B cell (primary cell): ENCODE measurements at regions of chr10 and their contacts with region 1.

Region 1: GRCh38 chr10:8254350-8254749 is 199.9 kb downstream of the GATA3 start:
- DNase-seq: no peak
- ATAC-seq: no peak
- H3K4me3 ChIP-seq: no peak overlapping the region
- H3K4me3 Mint-ChIP-seq: no peak overlapping the region
- H3K27ac ChIP-seq: no peak overlapping the region
- H3K27ac Mint-ChIP-seq: no peak overlapping the region
- H3K4me1 ChIP-seq: no peaks in the 10 kb centered on the region
- H3K4me1 Mint-ChIP-seq: no peaks in the 10 kb centered on the region
- H3K27me3 ChIP-seq: no peaks in the 10 kb centered on the region
- H3K27me3 Mint-ChIP-seq: no peaks in the 10 kb centered on the region
- CTCF ChIP-seq: no peak

Region 2: GRCh38 chr10:7750222-7750621 is 504.1 kb before region 1 on chr10:
- CTCF ChIA-PET with region 1: no interaction called
- POLR2A ChIA-PET with region 1: no interaction called
- intact Hi-C with region 1: no loop called
- DNase-seq: no peak
- ATAC-seq: no peak
- H3K4me3 ChIP-seq: no peak overlapping the region
- H3K4me3 Mint-ChIP-seq: no peak overlapping the region
- H3K27ac ChIP-seq: no peak overlapping the region
- H3K27ac Mint-ChIP-seq: no peak overlapping the region
- H3K4me1 ChIP-seq: no peaks in the 10 kb centered on the region
- H3K4me1 Mint-ChIP-seq: no peaks in the 10 kb centered on the region
- H3K27me3 ChIP-seq: no peaks in the 10 kb centered on the region
- H3K27me3 Mint-ChIP-seq: no peaks in the 10 kb centered on the region
- CTCF ChIP-seq: no peak

Region 3: GRCh38 chr10:8331883-8332729 is 77.8 kb after region 1 on chr10:
- CTCF ChIA-PET with region 1: no interaction called
- POLR2A ChIA-PET with region 1: no interaction called
- intact Hi-C with region 1: no loop called
- DNase-seq: peak; percentile 31
- ATAC-seq: no peak
- H3K4me3 ChIP-seq: no peak overlapping the region
- H3K4me3 Mint-ChIP-seq: peak overlapping the region; percentile 67
- H3K27ac ChIP-seq: no peak overlapping the region
- H3K27ac Mint-ChIP-seq: no peak overlapping the region
- H3K4me1 ChIP-seq: peaks cover 7 to 13% of the 10 kb centered on the region in 2 donors
- H3K4me1 Mint-ChIP-seq: peaks cover 14% of the 10 kb centered on the region
- H3K27me3 ChIP-seq: peaks cover 0 to 19% (median 3%) of the 10 kb centered on the region in 4 experiments
- H3K27me3 Mint-ChIP-seq: peaks cover 41% of the 10 kb centered on the region
- CTCF ChIP-seq: no peak

Region 4: DNA sequence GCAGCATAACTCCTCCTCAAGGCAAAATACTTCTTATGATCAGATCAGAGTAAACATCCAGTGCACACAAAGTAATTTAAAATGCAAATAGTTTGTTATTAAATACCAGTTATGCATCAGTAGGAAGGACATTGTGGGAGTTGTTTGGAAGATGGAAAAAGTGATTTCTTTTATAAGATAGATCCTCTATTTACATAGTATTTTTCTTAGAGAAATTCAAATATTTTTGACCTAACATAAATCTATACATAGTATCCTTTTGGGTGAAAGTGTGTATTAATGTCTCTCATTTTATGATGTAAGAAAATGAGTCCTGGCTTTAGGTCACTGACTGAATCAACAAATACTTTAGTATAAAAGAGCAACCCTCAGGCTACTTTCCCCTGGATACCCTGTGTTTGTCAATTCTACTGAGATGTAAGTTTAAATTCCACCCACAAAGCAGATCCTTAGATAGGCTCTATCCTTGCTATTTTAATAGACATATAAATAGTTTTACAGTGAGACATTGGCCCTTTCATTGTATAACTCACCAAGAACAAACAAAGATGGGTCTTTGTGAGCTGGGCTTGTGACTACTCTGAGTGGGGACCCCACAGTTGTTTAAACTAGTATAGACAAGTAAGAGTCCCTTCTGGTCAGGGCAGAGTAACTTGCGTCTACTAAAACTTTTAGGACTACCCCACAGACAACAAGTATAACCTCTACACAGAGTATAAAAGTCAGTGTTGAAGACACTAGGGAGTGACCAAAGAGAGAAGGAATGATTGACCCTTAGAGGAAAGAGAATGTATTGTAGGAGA is 934.0 kb after region 1 on chr10:
- CTCF ChIA-PET with region 1: no interaction called
- POLR2A ChIA-PET with region 1: no interaction called
- intact Hi-C with region 1: loop called (anchors 5 kb)
- DNase-seq: no peak
- ATAC-seq: no peak
- H3K4me3 ChIP-seq: no peak overlapping the region
- H3K4me3 Mint-ChIP-seq: no peak overlapping the region
- H3K27ac ChIP-seq: no peak overlapping the region
- H3K27ac Mint-ChIP-seq: no peak overlapping the region
- H3K4me1 ChIP-seq: no peaks in the 10 kb centered on the region
- H3K4me1 Mint-ChIP-seq: no peaks in the 10 kb centered on the region
- H3K27me3 ChIP-seq: no peaks in the 10 kb centered on the region
- H3K27me3 Mint-ChIP-seq: peaks cover 5% of the 10 kb centered on the region
- CTCF ChIP-seq: no peak